ENCODE measurements at regions of chr2 and their contacts with region 1.

Region 1: DNA sequence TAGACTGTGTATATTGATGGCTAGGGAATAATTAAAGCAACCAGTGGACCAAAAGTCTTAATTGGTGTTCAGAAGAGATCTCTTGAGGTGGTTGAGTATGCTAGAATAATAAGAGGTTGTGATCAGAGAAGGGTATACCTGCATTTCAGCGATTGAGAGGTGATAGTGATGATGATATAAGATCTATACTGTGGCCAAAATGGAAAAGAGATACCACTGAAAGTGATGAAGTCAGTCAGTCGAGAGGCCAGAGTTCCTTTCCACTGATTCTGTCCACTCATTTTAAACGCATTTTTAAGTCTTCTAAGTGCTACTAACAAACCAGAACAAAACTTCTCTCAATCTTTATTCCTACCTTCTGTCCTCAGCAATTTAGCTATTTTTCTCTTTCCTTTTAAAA is 32.9 kb downstream of the ACTR3 start:
- DNase-seq: no peak
- H3K4me3 Mint-ChIP-seq: no peak overlapping the region
- H3K27ac Mint-ChIP-seq: no peak overlapping the region
- H3K4me1 Mint-ChIP-seq: peaks cover 22% of the 10 kb centered on the region
- H3K27me3 Mint-ChIP-seq: no peaks in the 10 kb centered on the region

Region 2: GRCh38 chr2:113876503-113877387 is 46.0 kb before region 1 on chr2:
- intact Hi-C with region 1: loop called (anchors 10 kb)
- DNase-seq: peak; percentile 93
- H3K4me3 Mint-ChIP-seq: peak overlapping the region; percentile 74
- H3K27ac Mint-ChIP-seq: peak overlapping the region; percentile 90
- H3K4me1 Mint-ChIP-seq: peaks cover 46% of the 10 kb centered on the region
- H3K27me3 Mint-ChIP-seq: no peaks in the 10 kb centered on the region

Region 3: GRCh38 chr2:113910110-113910717 is 12.6 kb before region 1 on chr2:
- intact Hi-C with region 1: loop called (anchors 2 kb)
- DNase-seq: peak; percentile 68
- H3K4me3 Mint-ChIP-seq: peak overlapping the region; percentile 6
- H3K27ac Mint-ChIP-seq: peak overlapping the region; percentile 88
- H3K4me1 Mint-ChIP-seq: peaks cover 51% of the 10 kb centered on the region
- H3K27me3 Mint-ChIP-seq: no peaks in the 10 kb centered on the region

Region 4: DNA sequence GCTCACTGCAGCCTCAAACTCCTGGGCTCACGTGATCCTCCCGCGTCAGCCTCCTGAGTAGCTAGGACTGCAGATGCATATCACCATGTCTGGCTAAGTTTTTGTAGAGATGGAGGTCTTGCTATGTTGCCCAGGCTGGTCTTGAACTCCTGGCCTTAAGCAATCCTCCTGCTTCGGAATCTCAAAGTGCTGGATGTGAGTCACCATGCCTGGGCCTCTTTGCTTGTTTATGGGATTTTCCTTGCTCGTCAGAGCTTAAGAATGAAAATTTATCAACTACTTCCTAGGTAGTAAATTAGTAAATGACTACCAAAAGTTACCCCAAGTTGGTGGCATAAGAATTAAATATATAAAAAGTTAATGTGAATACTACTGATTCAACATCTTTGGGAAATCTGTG is 18.1 kb after region 1 on chr2:
- intact Hi-C with region 1: loop called (anchors 2 kb)
- DNase-seq: no peak
- H3K4me3 Mint-ChIP-seq: no peak overlapping the region
- H3K27ac Mint-ChIP-seq: no peak overlapping the region
- H3K4me1 Mint-ChIP-seq: peaks cover 6% of the 10 kb centered on the region
- H3K27me3 Mint-ChIP-seq: no peaks in the 10 kb centered on the region

Region 5: GRCh38 chr2:113959202-113959601 is 36.4 kb after region 1 on chr2:
- intact Hi-C with region 1: loop called (anchors 5 kb)
- DNase-seq: no peak
- H3K4me3 Mint-ChIP-seq: no peak overlapping the region
- H3K27ac Mint-ChIP-seq: no peak overlapping the region
- H3K4me1 Mint-ChIP-seq: peaks cover 9% of the 10 kb centered on the region
- H3K27me3 Mint-ChIP-seq: no peaks in the 10 kb centered on the region